ENCODE measurements at regions of chr1 and their contacts with region 1.

Region 1: GRCh38 chr1:219660666-219661463 is 48.0 kb upstream of the ZC3H11B start:
- DNase-seq: peak; percentile 92

Region 2: GRCh38 chr1:219173758-219174588 is 486.9 kb before region 1 on chr1 and contains the start of gene LYPLAL1:
- intact Hi-C with region 1: loop called (anchors 10 kb)
- DNase-seq: peak; percentile 96
- total RNA-seq, gene LYPLAL1: 99.4 TPM

Region 3: GRCh38 chr1:219304227-219305226 is 356.3 kb before region 1 on chr1:
- intact Hi-C with region 1: loop called (anchors 10 kb)
- DNase-seq: no peak

Region 4: GRCh38 chr1:219398815-219399396 is 262.0 kb before region 1 on chr1:
- intact Hi-C with region 1: loop called (anchors 5 kb)
- DNase-seq: no peak

Region 5: DNA sequence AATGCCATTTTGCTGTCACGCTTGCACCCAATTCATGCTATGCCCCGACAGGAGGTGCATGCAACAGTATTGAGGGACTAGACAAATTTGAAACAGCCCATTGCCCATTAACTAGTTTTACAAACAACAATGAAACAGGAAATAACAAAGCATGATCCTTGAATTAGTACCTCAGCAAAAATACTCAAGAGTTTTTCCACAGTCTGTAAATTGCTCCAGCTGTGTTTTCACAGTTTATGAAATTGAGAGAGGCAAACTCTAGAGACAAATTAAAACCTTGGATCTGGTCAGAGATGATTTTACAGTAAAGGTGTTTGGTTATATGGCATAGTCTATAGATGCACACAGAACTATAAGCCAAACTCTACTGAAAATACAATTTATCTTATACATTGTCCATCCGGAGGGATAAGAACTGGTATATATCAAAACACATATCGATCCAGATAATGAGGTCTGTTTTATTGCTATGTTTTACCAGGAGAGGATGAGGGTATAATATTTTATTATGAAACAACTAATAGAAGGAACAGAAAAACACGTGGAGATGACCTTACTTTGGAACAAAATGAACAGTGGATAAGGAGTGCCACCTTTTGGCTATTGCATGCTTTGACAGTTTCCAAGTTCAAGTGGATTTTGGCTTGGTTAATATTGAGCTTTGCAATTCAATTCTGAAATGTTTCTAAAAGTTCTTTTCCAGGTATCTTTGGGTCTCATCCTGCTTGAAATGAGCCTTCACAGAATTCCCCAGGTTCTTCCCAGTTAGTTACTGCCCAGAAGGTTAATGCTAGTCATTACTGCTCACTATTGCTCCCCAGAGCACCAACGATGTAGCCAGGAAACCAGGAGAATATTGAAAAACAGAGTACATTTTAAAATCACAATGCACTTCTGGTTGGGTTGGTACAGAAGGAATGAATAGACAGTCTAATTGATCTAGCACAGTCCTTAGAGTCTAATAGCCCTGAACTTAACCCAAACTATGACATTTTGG is 93.6 kb before region 1 on chr1:
- intact Hi-C with region 1: loop called (anchors 5 kb)
- DNase-seq: no peak

Region 6: DNA sequence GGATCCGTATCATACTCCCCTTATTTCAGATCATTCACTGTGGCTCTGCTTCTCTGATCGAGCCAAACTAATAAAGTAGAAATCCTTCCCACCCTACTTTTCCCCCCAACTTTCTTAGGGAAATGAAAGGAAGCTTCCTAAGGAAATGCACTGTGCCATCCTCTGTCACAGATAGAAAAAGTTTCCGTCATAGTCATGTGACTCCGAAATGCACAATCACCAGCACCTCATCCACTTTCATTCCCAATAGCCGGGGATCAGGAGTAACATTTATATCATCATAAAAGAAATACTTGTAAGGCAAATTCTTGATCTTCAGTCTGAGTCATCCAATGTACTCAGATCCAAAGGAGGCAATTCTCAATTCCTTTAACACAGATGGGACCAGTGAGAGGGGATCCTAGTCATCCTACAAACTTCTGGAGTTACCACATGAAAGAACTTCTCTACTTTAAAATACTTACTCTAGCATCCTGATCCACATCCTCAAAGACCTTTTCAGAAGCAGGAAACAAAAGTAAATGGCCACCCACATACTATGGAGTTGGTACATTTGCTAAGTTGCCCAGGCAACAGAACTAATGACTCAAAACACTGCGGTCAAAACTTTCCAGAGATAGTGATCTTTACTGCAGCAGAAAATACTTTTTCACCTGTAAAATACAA is 49.8 kb after region 1 on chr1:
- intact Hi-C with region 1: no loop called
- DNase-seq: no peak

Region 7: DNA sequence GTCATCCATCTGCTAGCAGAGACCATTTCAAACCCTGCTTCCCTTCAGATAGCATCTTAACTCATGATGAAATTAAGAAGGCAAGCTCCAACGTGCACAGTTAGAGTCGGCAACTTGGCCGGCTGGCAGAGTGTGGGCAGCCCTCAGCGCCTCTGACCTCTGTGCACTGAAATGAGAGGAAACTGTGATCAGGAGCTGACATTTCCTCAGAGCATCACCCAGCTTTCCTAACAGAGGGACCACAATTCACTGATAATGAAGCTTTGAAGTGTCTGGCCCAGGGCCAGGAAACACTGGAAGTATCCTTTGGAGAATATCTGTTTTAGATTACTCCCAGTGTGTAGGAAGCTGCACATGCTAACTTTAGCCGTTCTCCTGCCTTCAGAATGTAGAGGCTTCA is 97.0 kb after region 1 on chr1:
- intact Hi-C with region 1: no loop called
- DNase-seq: no peak

Region 8: DNA sequence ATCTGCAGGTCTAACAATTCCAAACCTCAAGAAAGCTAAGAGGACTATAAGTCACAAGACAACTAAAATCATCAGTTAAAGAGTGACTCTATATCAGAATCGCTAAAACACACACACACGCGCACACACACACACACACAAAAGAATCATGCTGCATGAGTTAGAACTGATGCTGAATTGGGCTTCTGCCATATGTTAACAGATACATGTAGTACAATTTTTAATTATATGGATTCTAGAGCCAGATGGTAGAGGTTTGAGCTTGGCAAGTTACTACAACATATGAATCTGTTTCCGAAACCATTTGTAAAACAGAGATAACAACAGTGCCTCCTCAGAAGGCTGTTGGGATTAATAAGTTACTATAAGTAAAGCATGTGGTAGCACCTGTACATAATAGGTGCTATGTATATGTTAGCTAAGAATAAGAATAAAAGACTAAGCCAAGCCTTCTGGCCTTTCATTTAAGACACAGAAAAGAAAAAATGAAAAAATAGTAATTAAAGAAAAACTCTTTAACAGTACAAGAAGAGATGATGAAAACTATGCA is 367.6 kb after region 1 on chr1:
- intact Hi-C with region 1: no loop called
- DNase-seq: no peak